ENCODE measurements at regions of chr20 and their contacts with region 1.

Region 1: GRCh38 chr20:58447511-58448391 is 58.7 kb downstream of the VAPB start:
- DNase-seq: peak; percentile 70
- ATAC-seq: peak; percentile 88
- H3K4me3 Mint-ChIP-seq: no peak overlapping the region
- H3K27ac Mint-ChIP-seq: peak overlapping the region; percentile 16; the same call in 1 of the 2 replicates
- H3K4me1 Mint-ChIP-seq: peaks cover 27% of the 10 kb centered on the region
- H3K27me3 Mint-ChIP-seq: no peaks in the 10 kb centered on the region
- CTCF ChIP-seq: peak; percentile 53

Region 2: DNA sequence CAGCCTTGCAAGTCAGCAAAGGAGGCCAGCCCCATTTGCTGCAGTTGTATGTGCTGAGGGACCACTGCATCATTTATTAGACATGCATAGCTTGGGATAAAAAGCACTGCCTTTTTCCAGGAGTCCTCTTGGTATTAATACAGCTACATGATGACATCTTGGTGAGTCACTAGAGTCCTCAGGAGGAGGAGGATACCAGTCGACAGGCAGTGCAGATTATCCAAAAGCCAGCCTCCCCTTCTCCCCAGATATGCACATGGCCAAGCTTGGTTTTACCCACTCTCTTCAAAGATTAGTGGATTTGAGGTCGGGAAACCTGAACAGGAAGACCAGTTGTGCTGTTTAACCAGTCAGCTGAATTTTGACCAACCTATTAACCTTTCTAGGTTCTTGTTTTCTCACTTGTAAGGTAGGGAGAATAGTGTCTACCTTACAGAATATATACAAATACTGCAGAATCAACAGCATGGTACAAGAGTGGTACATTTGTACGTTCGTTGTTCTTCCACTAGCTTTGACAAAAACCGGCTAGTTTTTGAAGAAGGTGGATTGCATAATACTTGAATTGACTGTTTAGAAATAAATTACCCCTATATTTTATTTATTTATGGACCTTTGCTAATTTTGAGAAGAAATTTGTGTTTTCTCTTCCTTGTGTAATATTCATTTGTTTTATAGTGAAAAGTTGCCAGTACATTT is 26.8 kb before region 1 on chr20:
- CTCF ChIA-PET with region 1: interaction called, 13 read pairs
- POLR2A ChIA-PET with region 1: no interaction called
- DNase-seq: no peak
- ATAC-seq: no peak
- H3K4me3 Mint-ChIP-seq: no peak overlapping the region
- H3K27ac Mint-ChIP-seq: peak overlapping the region; percentile 46
- H3K4me1 Mint-ChIP-seq: peaks cover 60% of the 10 kb centered on the region
- H3K27me3 Mint-ChIP-seq: no peaks in the 10 kb centered on the region
- CTCF ChIP-seq: no peak